Endothelial cell of umbilical vein (primary cell): ENCODE measurements at regions of chr6 and their contacts with region 1.

Region 1: GRCh38 chr6:150813319-150813992 is 52.0 kb upstream of the MTHFD1L start:
- DNase-seq: no peak
- H3K4me3 ChIP-seq: no peak overlapping the region
- H3K27ac ChIP-seq: peak overlapping the region; percentile 12
- H3K4me1 ChIP-seq: peaks cover 10% of the 10 kb centered on the region
- H3K27me3 ChIP-seq: no peaks in the 10 kb centered on the region
- CTCF ChIP-seq: no peak
- POLR2A ChIP-seq: no peak

Region 2: DNA sequence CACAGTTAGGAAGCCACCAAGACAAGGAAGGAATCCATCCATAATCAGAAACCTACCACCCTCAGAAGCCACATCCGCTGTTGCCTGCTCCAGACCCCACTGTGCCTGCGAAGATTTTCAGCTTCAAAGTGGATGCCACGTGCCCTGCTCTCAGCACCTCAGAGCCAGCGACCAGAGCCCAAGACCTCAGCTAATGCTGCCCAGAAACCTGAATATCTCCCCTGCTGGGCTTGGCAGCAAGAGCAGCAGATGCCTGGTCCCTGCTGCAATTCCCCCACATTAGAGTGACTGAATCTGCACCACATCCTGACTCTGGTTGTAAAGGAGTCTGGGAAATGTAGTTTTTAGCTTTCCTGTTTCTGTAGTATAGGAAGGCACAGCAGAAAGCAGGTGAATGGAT is 733.9 kb before region 1 on chr6:
- CTCF ChIA-PET with region 1: interaction called, 104 read pairs
- POLR2A ChIA-PET with region 1: no interaction called
- dilution Hi-C with region 1: no loop called
- intact Hi-C with region 1: no loop called
- DNase-seq: no peak
- H3K4me3 ChIP-seq: no peak overlapping the region
- H3K27ac ChIP-seq: no peak overlapping the region
- H3K4me1 ChIP-seq: no peaks in the 10 kb centered on the region
- H3K27me3 ChIP-seq: peaks cover 11 to 12% of the 10 kb centered on the region in 2 experiments
- CTCF ChIP-seq: no peak
- POLR2A ChIP-seq: no peak

Region 3: GRCh38 chr6:150395398-150396009 is 418.0 kb before region 1 on chr6:
- CTCF ChIA-PET with region 1: interaction called, 22 read pairs
- POLR2A ChIA-PET with region 1: no interaction called
- dilution Hi-C with region 1: no loop called
- intact Hi-C with region 1: no loop called
- DNase-seq: peak; percentile 50
- H3K4me3 ChIP-seq: no peak overlapping the region
- H3K27ac ChIP-seq: no peak overlapping the region
- H3K4me1 ChIP-seq: no peaks in the 10 kb centered on the region
- H3K27me3 ChIP-seq: peaks cover 5 to 11% of the 10 kb centered on the region in 2 experiments
- CTCF ChIP-seq: peak; percentile 59 to 70
- POLR2A ChIP-seq: no peak

Region 4: DNA sequence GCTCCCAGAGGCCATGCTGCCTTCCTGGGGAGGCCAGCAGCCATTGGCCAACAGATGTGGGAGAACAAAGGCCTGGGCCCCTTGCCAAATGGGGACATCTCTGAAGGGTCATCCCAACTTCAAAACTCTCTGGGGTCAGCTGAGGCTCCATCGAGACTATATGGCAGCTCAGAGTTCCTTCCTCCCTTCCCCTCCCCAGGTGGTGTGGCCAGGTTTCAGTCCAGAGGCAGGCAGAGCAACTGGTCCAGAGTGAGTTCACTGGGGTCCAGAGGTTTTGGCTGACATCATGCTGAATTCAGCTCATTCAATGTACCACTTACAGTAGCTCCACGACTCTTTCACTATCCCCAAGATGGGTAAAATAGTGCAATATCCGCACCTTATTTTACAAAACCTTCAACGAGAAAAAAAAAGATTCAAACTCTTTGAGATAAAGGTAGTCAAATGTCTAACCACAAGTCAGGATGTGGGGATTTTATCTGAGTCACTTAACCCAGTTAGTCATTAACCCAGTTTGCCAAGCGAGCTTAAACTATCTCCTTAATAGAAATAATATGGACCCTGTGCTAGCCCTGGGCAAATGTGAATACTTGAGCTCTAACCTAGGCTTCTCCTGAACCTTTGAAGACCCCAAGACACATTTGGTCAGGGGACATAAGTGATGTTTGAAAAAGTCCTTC is 322.2 kb before region 1 on chr6:
- CTCF ChIA-PET with region 1: interaction called, 3 read pairs
- POLR2A ChIA-PET with region 1: no interaction called
- dilution Hi-C with region 1: no loop called
- intact Hi-C with region 1: loop called (anchors 2 kb)
- DNase-seq: no peak
- H3K4me3 ChIP-seq: no peak overlapping the region
- H3K27ac ChIP-seq: no peak overlapping the region
- H3K4me1 ChIP-seq: peaks cover 18% of the 10 kb centered on the region
- H3K27me3 ChIP-seq: no peaks in the 10 kb centered on the region
- CTCF ChIP-seq: no peak
- POLR2A ChIP-seq: no peak

Region 5: GRCh38 chr6:150685860-150686259 is 127.6 kb before region 1 on chr6:
- CTCF ChIA-PET with region 1: interaction called, 5 read pairs
- POLR2A ChIA-PET with region 1: no interaction called
- dilution Hi-C with region 1: no loop called
- intact Hi-C with region 1: loop called (anchors 1 kb)
- DNase-seq: peak; percentile 23
- H3K4me3 ChIP-seq: no peak overlapping the region
- H3K27ac ChIP-seq: no peak overlapping the region
- H3K4me1 ChIP-seq: peaks cover 60% of the 10 kb centered on the region
- H3K27me3 ChIP-seq: no peaks in the 10 kb centered on the region
- CTCF ChIP-seq: peak; percentile 44 to 46
- POLR2A ChIP-seq: no peak

Region 6: GRCh38 chr6:150881911-150882481 is 68.5 kb after region 1 on chr6:
- CTCF ChIA-PET with region 1: interaction called, 20 read pairs
- POLR2A ChIA-PET with region 1: no interaction called
- dilution Hi-C with region 1: no loop called
- intact Hi-C with region 1: loop called (anchors 5 kb)
- DNase-seq: peak; percentile 98
- H3K4me3 ChIP-seq: no peak overlapping the region
- H3K27ac ChIP-seq: peak overlapping the region; percentile 91
- H3K4me1 ChIP-seq: peaks cover 36% of the 10 kb centered on the region
- H3K27me3 ChIP-seq: no peaks in the 10 kb centered on the region
- CTCF ChIP-seq: no peak
- POLR2A ChIP-seq: no peak

Region 7: DNA sequence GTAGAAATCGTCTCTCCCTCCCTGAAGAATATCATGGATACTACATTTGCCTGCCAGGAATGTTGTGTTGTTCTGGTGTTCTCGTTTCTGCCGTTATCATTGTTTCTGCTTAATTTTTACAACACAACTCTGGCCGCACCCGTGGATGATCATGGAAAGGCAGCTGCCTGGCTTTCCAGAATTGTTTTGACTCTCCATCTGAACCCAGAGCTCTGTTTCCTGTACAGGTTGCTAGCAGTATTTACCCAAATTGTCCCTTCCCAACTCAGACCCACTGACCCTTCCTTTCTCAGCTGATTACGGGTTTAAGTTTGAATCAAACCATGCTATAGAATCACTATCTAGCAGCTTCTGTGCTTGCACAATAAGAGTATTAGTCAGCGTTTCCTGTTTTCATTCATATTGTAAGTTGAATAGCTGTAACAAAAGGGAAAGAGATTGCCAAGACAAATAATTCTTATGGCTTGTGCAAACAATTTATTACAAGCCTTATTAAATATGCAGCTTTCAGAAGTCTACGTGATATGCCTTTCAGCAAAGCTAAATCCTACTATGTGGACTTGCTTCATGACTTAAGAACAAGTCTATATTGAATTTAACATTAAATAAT is 191.1 kb after region 1 on chr6:
- CTCF ChIA-PET with region 1: no interaction called
- POLR2A ChIA-PET with region 1: no interaction called
- dilution Hi-C with region 1: no loop called
- intact Hi-C with region 1: no loop called
- DNase-seq: peak; percentile 100
- H3K4me3 ChIP-seq: no peak overlapping the region
- H3K27ac ChIP-seq: peak overlapping the region; percentile 94
- H3K4me1 ChIP-seq: peaks cover 41% of the 10 kb centered on the region
- H3K27me3 ChIP-seq: no peaks in the 10 kb centered on the region
- CTCF ChIP-seq: no peak
- POLR2A ChIP-seq: peak; percentile 71